ENCODE measurements at regions of chr2 and their contacts with region 1.

Region 1: DNA sequence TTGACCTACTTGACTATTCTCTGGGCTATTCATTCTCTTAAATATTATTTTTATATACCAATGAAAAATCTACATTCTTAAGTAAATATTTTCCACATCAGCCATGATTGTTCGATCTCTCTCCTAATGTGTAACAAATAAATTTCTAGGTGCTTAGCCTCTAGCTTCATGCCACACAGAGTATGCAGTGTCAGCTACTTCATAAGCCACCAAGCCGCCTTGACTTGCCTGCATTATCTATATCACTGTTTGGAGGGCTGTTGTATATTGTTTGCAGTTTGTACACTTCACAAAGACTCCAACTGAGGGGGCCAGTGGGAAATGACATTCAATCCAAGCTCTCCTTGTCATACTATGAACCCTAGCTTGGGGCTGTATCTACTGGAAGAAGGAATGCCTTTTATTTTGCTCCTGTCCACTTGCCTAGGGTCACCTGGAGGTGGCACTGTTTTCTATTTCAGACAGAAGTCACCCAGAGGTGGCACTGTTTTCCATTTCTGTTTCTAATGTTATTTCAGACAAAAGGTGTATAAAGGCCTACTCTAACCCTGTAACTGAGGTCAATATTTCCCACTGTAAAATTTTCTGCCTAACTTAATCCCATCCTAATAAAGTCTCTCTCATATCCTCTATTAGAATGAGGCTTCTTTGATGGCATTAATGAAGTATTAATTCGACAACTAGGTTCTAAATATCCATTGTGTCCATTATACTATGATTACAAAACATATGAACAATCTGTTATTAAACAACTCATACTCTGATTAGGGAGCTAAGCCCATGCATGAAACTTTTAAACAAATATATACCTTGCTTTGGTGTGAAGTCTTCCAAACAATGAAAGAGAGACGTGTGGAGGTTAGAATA is 36.4 kb downstream of the COL5A2 start:
- DNase-seq: peak; percentile 61
- H3K4me3 Mint-ChIP-seq: no peak overlapping the region
- H3K27ac Mint-ChIP-seq: no peak overlapping the region
- H3K4me1 Mint-ChIP-seq: no peaks in the 10 kb centered on the region
- H3K27me3 Mint-ChIP-seq: no peaks in the 10 kb centered on the region

Region 2: GRCh38 chr2:189153619-189154018 is 10.5 kb after region 1 on chr2:
- CTCF ChIA-PET with region 1: interaction called, 24 read pairs
- DNase-seq: no peak
- H3K4me3 Mint-ChIP-seq: no peak overlapping the region
- H3K27ac Mint-ChIP-seq: no peak overlapping the region
- H3K4me1 Mint-ChIP-seq: no peaks in the 10 kb centered on the region
- H3K27me3 Mint-ChIP-seq: no peaks in the 10 kb centered on the region